Vagina (tissue), 2 donors: ENCODE measurements at regions of chr9 and their contacts with region 1.

Region 1: DNA sequence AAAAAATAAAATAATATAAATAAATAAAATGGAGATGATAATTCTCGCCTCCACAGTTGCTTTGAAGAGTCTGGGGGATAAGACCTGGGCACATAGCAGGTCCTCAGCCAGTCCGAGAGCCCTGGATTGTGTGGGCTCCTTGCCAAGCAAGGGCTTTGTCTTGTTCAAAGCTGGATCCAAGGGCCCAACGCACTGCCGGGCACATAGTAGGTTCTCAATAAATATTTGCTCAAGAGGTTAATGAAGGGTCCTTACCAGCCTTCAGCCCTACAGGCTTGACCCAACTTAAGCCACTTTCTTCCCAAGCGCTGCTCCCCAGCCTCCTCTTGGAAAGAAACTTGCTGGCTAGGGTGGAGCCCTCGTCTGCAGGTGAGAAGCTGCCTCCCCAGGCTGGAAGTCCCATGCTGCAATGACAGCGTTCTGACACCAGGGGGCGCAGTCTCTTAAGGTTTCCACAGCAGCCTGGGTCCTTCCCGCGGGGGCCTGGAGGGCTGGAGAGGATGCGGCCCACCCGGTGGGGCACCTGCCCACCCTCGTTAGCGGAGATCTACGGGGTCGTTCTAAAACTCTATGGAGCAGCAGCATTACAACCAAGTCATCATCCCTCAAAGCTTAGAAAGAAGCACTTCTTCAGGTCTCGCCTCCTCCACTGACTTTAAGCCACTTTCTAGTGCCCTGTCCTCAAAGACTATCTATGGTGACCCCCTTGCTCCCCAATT is 115.2 kb downstream of the LHX2 start:
- DNase-seq: no peak
- H3K4me3 ChIP-seq: no peak overlapping the region
- H3K27ac ChIP-seq: no peak overlapping the region
- H3K4me1 ChIP-seq: no peaks in the 10 kb centered on the region
- H3K27me3 ChIP-seq: no peaks in the 10 kb centered on the region
- CTCF ChIP-seq: peak; percentile 92 to 97 (median 96)
- POLR2A ChIP-seq: no peak

Region 2: DNA sequence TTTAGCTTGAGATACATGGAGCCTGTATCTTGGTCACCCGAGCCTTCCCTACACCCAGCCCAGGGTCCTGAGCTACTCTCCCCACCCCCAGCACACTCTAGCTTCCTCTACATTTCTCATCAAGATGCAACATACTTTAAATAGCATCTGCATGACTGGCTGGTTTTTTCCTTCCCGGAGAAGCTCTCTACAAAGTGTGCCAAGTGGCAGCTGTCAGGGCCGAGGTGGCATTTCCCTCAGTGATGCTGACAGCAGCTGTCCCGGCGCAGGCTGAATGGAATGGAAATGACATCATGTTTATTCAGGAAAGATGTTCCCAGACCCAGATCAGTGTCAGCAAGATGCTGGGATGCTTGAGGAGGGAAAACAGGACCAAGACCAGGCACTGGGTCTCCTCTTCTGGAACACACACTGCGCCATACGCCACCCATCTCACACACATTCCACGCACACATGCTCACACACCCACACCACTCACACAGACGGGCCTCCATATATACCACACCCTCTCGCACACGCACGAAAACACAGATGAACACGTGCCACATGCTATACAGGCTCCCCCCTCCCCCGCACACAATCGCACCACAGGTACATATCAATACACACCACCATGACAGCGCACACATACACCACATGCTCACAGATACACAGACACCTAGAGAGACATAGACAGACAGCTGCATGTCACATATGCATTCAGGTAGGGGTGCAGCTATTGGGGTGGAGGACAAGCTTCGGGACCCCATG is 47.4 kb before region 1 on chr9:
- intact Hi-C with region 1: no loop called
- DNase-seq: no peak
- H3K4me3 ChIP-seq: no peak overlapping the region
- H3K27ac ChIP-seq: no peak overlapping the region
- H3K4me1 ChIP-seq: no peaks in the 10 kb centered on the region
- H3K27me3 ChIP-seq: no peaks in the 10 kb centered on the region
- CTCF ChIP-seq: no peak
- POLR2A ChIP-seq: no peak

Region 3: GRCh38 chr9:124309665-124310064 is 182.9 kb after region 1 on chr9:
- intact Hi-C with region 1: loop called (anchors 5 kb)
- DNase-seq: no peak
- H3K4me3 ChIP-seq: no peak overlapping the region
- H3K27ac ChIP-seq: no peak overlapping the region
- H3K4me1 ChIP-seq: no peaks in the 10 kb centered on the region
- H3K27me3 ChIP-seq: no peaks in the 10 kb centered on the region
- CTCF ChIP-seq: no peak
- POLR2A ChIP-seq: no peak